Activated CD4-positive, alpha-beta memory T cell treated with anti-CD3 and anti-CD28 coated beads, Interleukin-2, amount 10 ng/mL, durations not matched to agents 7 days and 5 days (primary cell): ENCODE measurements at regions of chr16 and their contacts with region 1.

Region 1: GRCh38 chr16:53549970-53550690 is 47.1 kb upstream of the AKTIP start:
- DNase-seq: peak; percentile 60
- H3K4me3 Mint-ChIP-seq: no peak overlapping the region
- H3K27ac Mint-ChIP-seq: no peak overlapping the region
- H3K4me1 Mint-ChIP-seq: peaks cover 26% of the 10 kb centered on the region
- H3K27me3 Mint-ChIP-seq: peaks cover 8% of the 10 kb centered on the region

Region 2: DNA sequence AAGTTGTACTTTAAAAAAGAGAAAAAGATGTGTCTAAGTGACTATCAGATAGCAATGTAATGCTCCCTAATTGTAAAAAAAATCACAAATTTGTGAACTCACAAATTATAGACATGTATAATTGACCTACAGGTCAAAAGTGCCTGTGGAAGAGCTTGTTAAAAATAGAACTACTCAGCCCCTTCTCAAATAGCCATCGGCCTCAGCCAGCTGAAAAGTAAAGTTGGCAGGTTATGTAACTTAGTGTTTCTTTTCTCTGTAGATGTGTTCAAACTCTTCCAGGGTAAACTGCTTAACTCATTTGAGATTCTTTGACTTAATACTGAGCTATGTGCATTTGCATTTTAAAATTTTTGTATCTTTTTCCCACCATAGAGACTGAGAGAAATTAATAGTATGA is 60.4 kb before region 1 on chr16:
- CTCF ChIA-PET with region 1: no interaction called
- POLR2A ChIA-PET with region 1: no interaction called
- DNase-seq: no peak
- H3K4me3 Mint-ChIP-seq: no peak overlapping the region
- H3K27ac Mint-ChIP-seq: no peak overlapping the region
- H3K4me1 Mint-ChIP-seq: peaks cover 12% of the 10 kb centered on the region
- H3K27me3 Mint-ChIP-seq: no peaks in the 10 kb centered on the region

Region 3: DNA sequence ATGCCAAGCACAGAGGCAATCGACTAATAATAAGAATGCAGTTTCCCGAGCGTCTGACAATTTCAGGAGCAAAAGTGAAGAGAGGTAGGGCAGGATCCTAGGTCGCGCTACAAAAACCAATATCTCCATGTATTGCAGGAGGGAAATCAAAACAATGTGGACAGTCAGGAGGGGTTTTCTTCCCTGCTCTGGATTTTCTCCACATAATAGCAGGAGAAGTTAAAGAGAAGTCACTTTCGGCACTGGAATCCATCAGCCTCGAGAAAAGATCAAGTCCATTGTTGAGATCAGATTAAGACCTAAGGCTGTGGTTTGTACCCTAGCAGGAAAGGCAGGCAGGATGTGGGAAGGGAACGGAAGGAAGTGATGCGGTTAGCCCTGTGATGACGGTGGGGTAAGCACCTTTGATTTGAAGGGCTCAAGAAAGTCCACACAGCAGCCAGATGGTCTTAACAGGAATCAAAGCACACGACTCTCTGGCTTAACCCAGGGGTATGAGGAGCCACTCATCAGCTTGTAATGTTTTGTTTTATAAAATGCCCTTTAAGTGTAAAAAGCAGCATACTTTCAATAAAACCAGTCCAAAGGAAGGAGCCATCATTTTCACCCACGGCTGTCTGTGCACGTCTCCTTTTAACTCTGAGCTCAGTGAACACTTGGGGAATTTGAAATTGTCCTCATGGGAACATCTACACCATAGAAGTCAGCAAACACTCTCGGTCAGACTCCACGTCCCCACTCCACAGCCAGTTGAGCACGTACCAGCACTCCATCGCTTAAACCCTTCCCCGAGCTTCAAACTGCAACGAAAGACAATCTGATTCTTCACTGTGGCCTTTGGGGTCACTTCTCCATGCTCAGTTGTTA is 31.3 kb before region 1 on chr16:
- CTCF ChIA-PET with region 1: interaction called, 9 read pairs
- POLR2A ChIA-PET with region 1: interaction called, 11 read pairs
- DNase-seq: peak; percentile 92
- H3K4me3 Mint-ChIP-seq: peak overlapping the region; percentile 66
- H3K27ac Mint-ChIP-seq: peak overlapping the region; percentile 91
- H3K4me1 Mint-ChIP-seq: peaks cover 52% of the 10 kb centered on the region
- H3K27me3 Mint-ChIP-seq: no peaks in the 10 kb centered on the region

Region 4: DNA sequence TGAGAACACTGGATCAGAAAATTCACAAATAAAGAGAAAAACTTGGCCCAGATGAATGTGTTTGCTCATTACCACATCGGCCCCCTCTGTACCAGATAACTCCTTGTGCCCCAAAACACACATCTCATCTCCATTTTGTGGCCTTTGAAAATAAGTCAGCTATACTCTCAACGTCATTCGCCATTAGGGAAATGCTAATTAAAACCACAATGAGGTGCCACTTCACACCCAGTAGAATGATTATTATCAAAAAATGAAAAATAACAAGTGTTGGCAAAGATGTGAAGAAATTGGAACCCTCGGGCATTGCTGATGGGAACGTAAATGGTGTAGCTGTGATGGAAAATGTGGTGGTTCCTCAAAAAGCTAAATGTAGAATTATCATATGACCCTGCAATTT is 12.5 kb before region 1 on chr16:
- CTCF ChIA-PET with region 1: interaction called, 21 read pairs
- POLR2A ChIA-PET with region 1: no interaction called
- DNase-seq: no peak
- H3K4me3 Mint-ChIP-seq: no peak overlapping the region
- H3K27ac Mint-ChIP-seq: no peak overlapping the region
- H3K4me1 Mint-ChIP-seq: peaks cover 27% of the 10 kb centered on the region
- H3K27me3 Mint-ChIP-seq: no peaks in the 10 kb centered on the region

Region 5: DNA sequence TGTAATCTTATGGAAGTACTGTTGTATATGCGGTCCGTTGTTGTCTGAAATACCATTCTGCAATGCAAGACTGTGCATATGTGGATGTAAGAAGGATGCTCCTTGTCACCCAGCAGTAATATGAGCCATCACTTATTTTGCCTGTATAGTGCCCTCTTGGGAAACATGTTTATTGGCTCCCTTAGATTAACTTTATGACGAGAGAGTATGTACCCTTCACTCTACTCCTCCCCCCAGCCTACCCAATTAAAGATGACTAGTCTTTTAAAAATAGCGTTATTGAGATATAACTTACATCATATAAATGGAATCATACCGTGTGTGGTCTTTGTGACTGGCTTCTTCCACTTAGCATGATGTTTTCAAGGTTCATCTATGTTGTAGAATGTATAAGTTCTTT is 187.4 kb after region 1 on chr16:
- CTCF ChIA-PET with region 1: no interaction called
- POLR2A ChIA-PET with region 1: no interaction called
- DNase-seq: no peak
- H3K4me3 Mint-ChIP-seq: no peak overlapping the region
- H3K27ac Mint-ChIP-seq: no peak overlapping the region
- H3K4me1 Mint-ChIP-seq: no peaks in the 10 kb centered on the region
- H3K27me3 Mint-ChIP-seq: no peaks in the 10 kb centered on the region